Adrenal gland (tissue), 19 donors: ENCODE measurements at regions of chr9 and their contacts with region 1.

Region 1: GRCh38 chr9:105244003-105244733 is at the start of gene SLC44A1:
- DNase-seq: peak; percentile 97 to 98 (median 98)
- H3K4me3 ChIP-seq: peak within 1 kb of the TSS; percentile 81 to 99 (median 88)
- H3K27ac ChIP-seq: peak within 1 kb of the TSS in 4 of 5 donors; percentile 62 to 91 (median 79)
- H3K4me1 ChIP-seq: peaks cover 0 to 48% of the 10 kb centered on the region in 2 donors
- H3K27me3 ChIP-seq: no peaks in the 10 kb centered on the region
- CTCF ChIP-seq: no peak
- POLR2A ChIP-seq: peak; percentile 93 to 95
- total RNA-seq, gene SLC44A1: 13.1 to 73.1 (median 41.7) TPM

Region 2: GRCh38 chr9:105187778-105188177 is 56.4 kb before region 1 on chr9:
- intact Hi-C with region 1: loop called in 1 of 2 experiments (anchors 10 kb)
- DNase-seq: peak in 3 of 7 donors; percentile 14 to 37 (median 27)
- H3K4me3 ChIP-seq: no peak overlapping the region
- H3K27ac ChIP-seq: peak overlapping the region in 2 of 5 donors; percentile 37 to 72
- H3K4me1 ChIP-seq: peaks cover 10 to 13% of the 10 kb centered on the region in 2 donors
- H3K27me3 ChIP-seq: no peaks in the 10 kb centered on the region
- CTCF ChIP-seq: no peak
- POLR2A ChIP-seq: no peak

Region 3: DNA sequence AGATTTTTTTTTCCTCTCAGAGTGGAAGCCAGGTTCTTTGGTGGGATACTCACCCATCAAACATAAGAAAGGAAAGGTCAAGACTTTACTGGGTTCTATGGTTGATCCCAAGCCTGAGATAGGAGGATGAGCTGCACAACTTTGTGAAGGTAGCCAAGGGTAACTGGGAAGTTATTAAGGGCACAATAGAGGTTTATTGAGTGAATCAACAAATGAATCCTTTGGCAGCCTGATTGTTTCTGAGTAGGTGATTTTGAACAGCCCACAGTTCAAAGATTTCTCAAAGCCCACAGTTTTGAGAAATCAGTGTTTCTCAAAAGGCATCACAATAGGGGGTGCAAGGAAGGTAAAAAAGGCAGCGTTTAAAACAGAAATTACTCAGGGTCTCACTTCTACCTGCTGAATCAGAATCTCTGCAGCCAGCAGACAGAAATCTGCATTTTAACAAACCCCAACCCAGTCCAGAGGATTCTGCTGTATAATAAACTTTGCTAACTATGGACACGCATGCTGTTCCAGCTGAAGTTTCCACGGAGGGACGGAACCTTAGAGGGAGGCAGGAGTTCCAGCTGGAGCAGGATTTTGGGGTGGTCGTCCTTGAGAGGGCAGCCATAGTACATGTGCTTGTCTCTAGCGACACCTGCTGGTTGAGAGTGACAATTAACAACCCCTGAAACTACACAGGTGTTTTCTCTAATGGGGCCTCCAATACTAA is 170.9 kb after region 1 on chr9:
- intact Hi-C with region 1: loop called in 1 of 2 experiments (anchors 10 kb)
- DNase-seq: peak; percentile 42 to 76 (median 62)
- H3K4me3 ChIP-seq: no peak overlapping the region
- H3K27ac ChIP-seq: no peak overlapping the region
- H3K4me1 ChIP-seq: peaks cover 3 to 4% of the 10 kb centered on the region in 2 donors
- H3K27me3 ChIP-seq: no peaks in the 10 kb centered on the region
- CTCF ChIP-seq: peak; percentile 83 to 96 (median 92)
- POLR2A ChIP-seq: no peak